Left colon (tissue), 2 donors: ENCODE measurements at regions of chr4 and their contacts with region 1.

Region 1: GRCh38 chr4:26320538-26321325 is at the start of gene RBPJ:
- DNase-seq: peak; percentile 92
- ATAC-seq: peak; percentile 68
- total RNA-seq, gene RBPJ: 32.6 to 53.2 TPM

Region 2: GRCh38 chr4:26028793-26029567 is 291.8 kb before region 1 on chr4:
- intact Hi-C with region 1: loop called in 1 of 2 experiments (anchors 10 kb)
- DNase-seq: peak; percentile 50 to 72
- ATAC-seq: peak; percentile 89

Region 3: GRCh38 chr4:26076000-26076587 is 244.6 kb before region 1 on chr4:
- intact Hi-C with region 1: loop called in 1 of 2 experiments (anchors 5 kb)
- DNase-seq: no peak
- ATAC-seq: no peak